Caco-2 (cell line): ENCODE measurements at regions of chr6 and their contacts with region 1.

Region 1: DNA sequence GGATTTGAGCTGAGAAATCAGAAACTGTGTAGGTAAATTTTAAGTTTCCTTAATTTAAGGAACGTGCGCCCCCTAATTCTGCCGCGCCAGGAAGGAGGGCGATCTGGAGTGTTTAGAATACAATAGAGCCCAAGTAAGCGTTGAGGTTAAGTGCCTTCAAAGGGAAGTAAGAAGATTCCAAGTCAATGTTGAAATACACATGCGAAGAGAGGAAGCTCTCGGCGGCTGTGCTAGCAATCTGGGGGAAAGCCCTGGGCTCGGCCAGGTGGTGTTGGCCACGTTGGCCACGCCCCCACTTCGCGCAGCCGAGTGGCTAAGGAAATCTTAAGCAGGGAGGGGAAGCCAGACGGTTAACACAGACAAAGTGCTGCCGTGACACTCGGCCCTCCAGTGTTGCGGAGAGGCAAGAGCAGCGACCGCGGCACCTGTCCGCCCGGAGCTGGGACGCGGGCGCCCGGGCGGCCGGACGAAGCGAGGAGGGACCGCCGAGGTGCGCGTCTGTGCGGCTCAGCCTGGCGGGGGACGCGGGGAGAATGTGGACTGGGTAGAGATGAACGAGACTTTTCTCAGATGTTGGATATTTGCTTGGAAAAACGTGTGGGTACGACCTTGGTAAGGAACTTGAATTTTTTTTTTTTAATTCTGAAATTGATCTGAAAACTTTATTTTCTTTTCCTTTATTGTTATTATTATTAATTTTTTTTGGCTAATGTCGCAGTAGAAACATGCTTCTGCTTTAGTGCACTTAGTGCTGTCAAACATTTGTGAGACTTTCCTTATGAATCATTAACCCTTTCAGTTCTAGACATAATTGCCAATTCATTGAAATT is at the start of gene PRDM1:
- DNase-seq: peak; percentile 93
- H3K4me3 ChIP-seq: peak within 1 kb of the TSS; percentile 56
- H3K4me3 Mint-ChIP-seq: peak within 1 kb of the TSS; percentile 87
- H3K27ac Mint-ChIP-seq: peak within 1 kb of the TSS; percentile 86
- H3K4me1 ChIP-seq: peaks cover 18% of the 10 kb centered on the region
- H3K4me1 Mint-ChIP-seq: peaks cover 36% of the 10 kb centered on the region
- H3K27me3 ChIP-seq: no peaks in the 10 kb centered on the region
- H3K27me3 Mint-ChIP-seq: no peaks in the 10 kb centered on the region
- CTCF ChIP-seq: peak; percentile 32 to 61
- total RNA-seq, gene PRDM1: 10.4 and 11.4 TPM in 2 replicates

Region 2: GRCh38 chr6:105509506-105510331 is 576.5 kb before region 1 on chr6:
- CTCF ChIA-PET with region 1: no interaction called
- POLR2A ChIA-PET with region 1: no interaction called
- intact Hi-C with region 1: loop called (anchors 1 kb)
- DNase-seq: peak; percentile 36 to 41
- H3K4me3 ChIP-seq: no peak overlapping the region
- H3K4me3 Mint-ChIP-seq: no peak overlapping the region
- H3K27ac Mint-ChIP-seq: no peak overlapping the region
- H3K4me1 ChIP-seq: no peaks in the 10 kb centered on the region
- H3K4me1 Mint-ChIP-seq: peaks cover 6% of the 10 kb centered on the region
- H3K27me3 ChIP-seq: no peaks in the 10 kb centered on the region
- H3K27me3 Mint-ChIP-seq: no peaks in the 10 kb centered on the region
- CTCF ChIP-seq: peak in 1 of 2 experiments; percentile 46

Region 3: DNA sequence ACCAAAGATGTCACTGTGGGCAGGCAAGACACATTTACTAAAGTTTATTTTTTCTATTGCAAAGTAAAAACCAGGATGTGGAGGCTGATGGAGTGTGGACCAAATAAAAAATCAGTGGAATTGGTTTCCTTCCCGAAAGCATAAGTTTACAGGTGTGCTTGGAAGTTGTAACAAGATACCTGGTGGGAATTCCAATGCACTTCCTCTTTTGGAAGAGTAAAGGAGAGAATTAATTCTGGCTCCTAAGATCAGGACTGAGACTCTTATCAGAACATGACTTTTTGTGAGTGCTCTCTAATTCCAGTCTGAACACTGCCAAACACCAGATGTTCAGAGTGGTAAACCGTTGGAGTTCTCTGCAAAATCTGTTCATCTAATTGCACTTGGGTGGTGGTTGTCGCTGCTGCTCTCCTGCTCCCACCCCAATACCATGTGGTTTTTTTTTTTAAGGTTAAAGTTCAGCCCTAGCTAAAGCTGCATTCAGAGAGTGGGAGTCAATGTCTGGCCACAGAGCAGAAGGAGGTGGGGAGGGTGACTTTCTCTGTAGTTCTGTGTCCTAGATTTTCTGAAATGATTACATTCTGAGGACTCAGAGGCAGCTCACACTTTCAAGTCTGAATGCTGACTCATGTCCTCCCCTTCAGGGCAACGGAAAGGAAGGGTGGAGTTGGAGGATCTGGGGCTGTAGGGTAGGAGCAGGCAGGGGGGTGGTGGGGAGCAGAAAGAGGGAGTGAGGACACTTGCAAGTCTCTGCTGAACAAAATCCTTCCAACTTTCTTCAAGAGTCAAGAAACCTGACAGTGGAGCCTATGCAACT is 275.9 kb before region 1 on chr6:
- CTCF ChIA-PET with region 1: no interaction called
- POLR2A ChIA-PET with region 1: no interaction called
- intact Hi-C with region 1: loop called (anchors 10 kb)
- DNase-seq: no peak
- H3K4me3 ChIP-seq: no peak overlapping the region
- H3K4me3 Mint-ChIP-seq: no peak overlapping the region
- H3K27ac Mint-ChIP-seq: peak overlapping the region; percentile 68
- H3K4me1 ChIP-seq: peaks cover 23% of the 10 kb centered on the region
- H3K4me1 Mint-ChIP-seq: peaks cover 16% of the 10 kb centered on the region
- H3K27me3 ChIP-seq: no peaks in the 10 kb centered on the region
- H3K27me3 Mint-ChIP-seq: no peaks in the 10 kb centered on the region
- CTCF ChIP-seq: no peak

Region 4: DNA sequence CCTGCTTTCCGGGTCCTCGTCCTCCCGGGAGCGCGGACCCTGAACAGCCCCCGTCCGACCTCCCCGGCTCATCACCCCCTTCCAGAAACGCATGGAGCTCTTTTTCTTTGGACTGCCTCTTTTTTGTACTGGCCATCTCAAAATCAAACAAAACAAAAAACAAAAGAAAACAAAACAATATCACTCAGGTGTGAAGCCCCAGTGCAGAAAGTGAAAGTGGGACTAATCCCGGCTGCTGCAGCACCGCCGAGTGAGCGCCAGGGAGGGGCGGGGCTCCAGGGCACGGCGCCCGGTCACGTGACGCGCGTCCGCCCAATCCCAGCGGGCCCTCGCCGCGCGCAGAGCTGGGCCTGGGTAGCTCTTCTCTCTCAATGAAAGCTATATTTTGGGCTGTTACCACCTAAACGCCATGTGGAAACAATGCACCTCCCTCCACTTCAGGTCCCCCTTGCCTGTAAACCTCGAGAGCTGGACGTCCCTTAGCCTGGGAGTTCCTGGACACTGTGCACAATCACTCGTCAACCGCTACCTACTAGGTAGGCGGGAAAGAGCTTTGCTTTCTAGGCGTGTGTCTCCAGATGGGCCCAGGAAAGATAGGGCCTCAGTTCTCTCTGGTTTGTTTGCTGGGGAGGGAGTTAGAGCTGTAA is 93.8 kb before region 1 on chr6:
- CTCF ChIA-PET with region 1: interaction called, 8 read pairs
- POLR2A ChIA-PET with region 1: no interaction called
- intact Hi-C with region 1: loop called (anchors 1 kb)
- DNase-seq: peak; percentile 75 to 88
- H3K4me3 ChIP-seq: peak overlapping the region; percentile 51
- H3K4me3 Mint-ChIP-seq: peak overlapping the region; percentile 73
- H3K27ac Mint-ChIP-seq: peak overlapping the region; percentile 73
- H3K4me1 ChIP-seq: peaks cover 16% of the 10 kb centered on the region; the same call in 1 of the 2 replicates
- H3K4me1 Mint-ChIP-seq: peaks cover 33% of the 10 kb centered on the region
- H3K27me3 ChIP-seq: no peaks in the 10 kb centered on the region
- H3K27me3 Mint-ChIP-seq: no peaks in the 10 kb centered on the region
- CTCF ChIP-seq: no peak

Region 5: GRCh38 chr6:106223300-106223930 is 137.2 kb after region 1 on chr6:
- CTCF ChIA-PET with region 1: interaction called, 5 read pairs
- POLR2A ChIA-PET with region 1: no interaction called
- intact Hi-C with region 1: loop called (anchors 1 kb)
- DNase-seq: peak; percentile 54 to 65
- H3K4me3 ChIP-seq: no peak overlapping the region
- H3K4me3 Mint-ChIP-seq: no peak overlapping the region
- H3K27ac Mint-ChIP-seq: no peak overlapping the region
- H3K4me1 ChIP-seq: peaks cover 6% of the 10 kb centered on the region; the same call in 1 of the 2 replicates
- H3K4me1 Mint-ChIP-seq: peaks cover 21% of the 10 kb centered on the region
- H3K27me3 ChIP-seq: no peaks in the 10 kb centered on the region
- H3K27me3 Mint-ChIP-seq: no peaks in the 10 kb centered on the region
- CTCF ChIP-seq: peak; percentile 52 to 56